Lower lobe of right lung (tissue), 2 donors: ENCODE measurements at regions of chr20 and their contacts with region 1.

Region 1: DNA sequence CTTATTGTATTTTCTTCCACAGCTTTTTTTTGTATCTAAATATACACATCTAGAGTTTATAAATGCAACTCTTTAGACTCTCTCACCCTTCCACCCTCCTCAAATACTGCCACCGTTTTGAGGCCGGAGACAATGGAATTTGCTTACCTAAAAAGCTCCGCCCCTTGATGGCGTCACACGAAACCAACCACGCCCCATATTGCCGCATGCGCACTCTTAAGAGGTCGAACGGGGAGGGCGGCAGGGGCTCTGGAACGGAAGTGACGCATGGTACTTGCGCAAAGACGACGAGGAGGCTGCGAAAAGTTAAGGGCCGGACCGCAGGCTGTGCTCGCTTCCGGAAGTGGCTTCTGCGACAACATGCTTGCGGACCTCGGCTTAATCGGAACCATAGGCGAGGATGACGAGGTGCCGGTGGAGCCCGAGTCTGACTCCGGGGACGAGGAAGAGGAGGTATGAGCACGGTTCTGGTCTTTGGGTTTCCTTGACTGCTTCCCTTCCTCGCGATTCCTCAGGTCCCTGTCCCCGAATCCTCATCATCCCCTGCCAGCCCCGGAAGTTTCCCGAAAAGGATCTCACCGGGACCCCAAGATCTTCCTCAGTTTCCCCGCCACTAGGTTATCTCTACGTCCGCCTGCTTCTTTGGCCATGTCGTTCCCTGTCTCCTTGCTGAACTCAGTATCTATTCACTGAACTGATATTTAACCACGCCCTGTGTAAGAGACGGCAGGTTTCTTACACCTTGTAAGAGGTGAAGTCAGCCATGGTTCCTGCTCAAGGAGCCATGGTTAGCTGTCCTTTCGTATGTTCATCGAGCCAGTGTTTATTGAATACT is at the start of gene DDX27:
- DNase-seq: peak; percentile 97
- ATAC-seq: peak; percentile 96 to 98
- H3K4me3 ChIP-seq: peak within 1 kb of the TSS; percentile 95
- H3K27ac ChIP-seq: peak within 1 kb of the TSS; percentile 90
- H3K4me1 ChIP-seq: peaks cover 21% of the 10 kb centered on the region
- H3K27me3 ChIP-seq: no peaks in the 10 kb centered on the region
- CTCF ChIP-seq: no peak
- total RNA-seq, gene DDX27: 27.8 TPM

Region 2: GRCh38 chr20:49132995-49133478 is 86.3 kb before region 1 on chr20:
- intact Hi-C with region 1: loop called (anchors 10 kb)
- DNase-seq: no peak
- ATAC-seq: peak; percentile 72 to 86
- H3K4me3 ChIP-seq: no peak overlapping the region
- H3K27ac ChIP-seq: peak overlapping the region; percentile 18
- H3K4me1 ChIP-seq: peaks cover 8% of the 10 kb centered on the region
- H3K27me3 ChIP-seq: no peaks in the 10 kb centered on the region
- CTCF ChIP-seq: peak; percentile 56